Gastrocnemius medialis (tissue), 4 donors: ENCODE measurements at regions of chr9 and their contacts with region 1.

Region 1: GRCh38 chr9:36036780-36037548 is at the start of gene RECK:
- DNase-seq: peak; percentile 62 to 72
- ATAC-seq: peak; percentile 78 to 87
- H3K4me3 ChIP-seq: peak within 1 kb of the TSS; percentile 68 to 90 (median 76)
- H3K27ac ChIP-seq: peak within 1 kb of the TSS; percentile 67 to 77 (median 68)
- H3K4me1 ChIP-seq: peaks cover 4 to 10% of the 10 kb centered on the region in 2 donors
- H3K27me3 ChIP-seq: peaks cover 0 to 10% (median 7%) of the 10 kb centered on the region in 3 donors
- CTCF ChIP-seq: no peak
- POLR2A ChIP-seq: peak; percentile 77 to 78
- total RNA-seq, gene RECK: 2.9 to 4.1 (median 3.5) TPM

Region 2: DNA sequence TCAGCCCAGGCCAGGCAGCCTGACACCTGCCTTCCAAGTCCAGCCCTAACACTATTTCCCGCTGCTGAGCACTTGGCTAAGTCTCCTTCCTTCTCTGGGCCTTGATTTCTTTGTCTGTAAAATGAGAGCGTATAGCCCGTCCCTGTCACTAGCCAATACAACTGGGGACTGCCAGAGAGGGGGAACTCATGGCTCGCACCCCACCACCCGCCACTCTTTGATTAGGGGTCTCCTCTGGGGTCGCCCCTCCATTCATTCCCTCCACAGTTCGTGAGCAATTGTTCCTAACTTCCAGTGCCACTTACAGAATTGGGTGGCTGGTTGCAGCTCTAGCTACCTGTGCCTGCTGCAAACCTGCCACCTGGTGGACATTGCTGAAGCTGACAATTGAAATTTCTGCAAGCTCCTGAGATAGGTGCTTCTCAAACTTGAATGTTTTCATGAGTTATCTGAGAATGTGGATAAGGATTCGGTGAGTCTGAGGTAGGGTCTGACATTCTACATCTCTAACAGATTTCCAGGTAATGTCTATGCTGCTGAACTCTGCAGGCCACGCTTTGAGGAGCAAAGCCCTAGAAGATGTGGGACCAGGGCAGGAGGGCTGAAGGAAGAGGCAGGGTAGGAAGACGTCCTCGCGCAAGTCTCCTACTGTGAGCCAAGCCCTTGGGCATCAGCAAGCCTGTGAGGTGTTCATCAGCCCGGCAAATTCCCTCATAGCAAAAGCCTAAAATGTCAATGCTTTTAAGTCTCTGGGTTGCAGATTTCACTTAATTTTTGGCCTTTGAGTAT is 13.5 kb before region 1 on chr9:
- in situ Hi-C with region 1: no loop called
- intact Hi-C with region 1: no loop called
- DNase-seq: peak; percentile 13 to 36
- ATAC-seq: peak; percentile 74 to 76
- H3K4me3 ChIP-seq: no peak overlapping the region
- H3K27ac ChIP-seq: no peak overlapping the region
- H3K4me1 ChIP-seq: no peaks in the 10 kb centered on the region
- H3K27me3 ChIP-seq: no peaks in the 10 kb centered on the region
- CTCF ChIP-seq: peak; percentile 36 to 81 (median 72)
- POLR2A ChIP-seq: no peak

Region 3: DNA sequence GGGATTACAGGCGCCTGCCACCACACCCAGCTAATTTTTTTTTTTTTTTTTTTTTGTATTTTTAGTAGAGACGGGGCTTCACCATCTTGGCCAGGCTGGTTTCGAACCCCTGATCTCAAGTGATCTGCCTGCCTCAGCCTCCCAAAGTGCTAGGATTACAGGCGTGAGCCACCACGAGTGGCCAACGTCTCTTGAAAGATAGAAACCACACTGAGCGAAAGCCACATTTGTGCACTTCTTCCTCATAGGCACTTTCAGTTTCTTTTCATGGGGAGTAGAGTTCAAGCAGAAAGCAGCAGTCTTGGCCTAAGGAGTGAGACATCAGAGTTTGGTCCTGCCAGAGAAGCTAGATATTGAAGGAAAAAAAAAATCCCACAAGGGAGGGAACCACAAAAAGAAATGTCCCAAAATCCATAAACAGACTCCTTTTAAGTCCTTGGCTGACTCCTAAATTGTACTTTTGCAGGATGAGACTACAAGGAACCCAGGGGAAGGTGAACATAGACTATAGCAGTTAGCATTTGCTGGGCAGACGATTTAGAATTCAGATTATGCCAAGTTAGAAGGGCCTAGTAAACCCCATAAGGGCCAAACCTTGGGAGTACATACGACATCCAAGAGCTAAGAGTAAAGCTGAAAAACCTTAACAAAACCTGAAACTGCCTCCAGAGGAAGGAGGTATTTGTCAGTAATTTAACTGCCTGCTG is 55.7 kb after region 1 on chr9:
- in situ Hi-C with region 1: no loop called
- intact Hi-C with region 1: loop called (anchors 10 kb)
- DNase-seq: no peak
- ATAC-seq: peak in 1 of 2 donors; percentile 60
- H3K4me3 ChIP-seq: no peak overlapping the region
- H3K27ac ChIP-seq: peak overlapping the region in 3 of 4 donors; percentile 0 to 22 (median 15)
- H3K4me1 ChIP-seq: peaks cover 0 to 13% of the 10 kb centered on the region in 2 donors
- H3K27me3 ChIP-seq: no peaks in the 10 kb centered on the region
- CTCF ChIP-seq: no peak
- POLR2A ChIP-seq: no peak